CD8-positive, alpha-beta T cell (primary cell): ENCODE measurements at regions of chr2 and their contacts with region 1.

Region 1: GRCh38 chr2:191144217-191144616 is 6.6 kb downstream of the STAT4 start:
- DNase-seq: no peak
- ATAC-seq: no peak
- H3K4me3 ChIP-seq: no peak overlapping the region
- H3K4me3 Mint-ChIP-seq: peak overlapping the region; percentile 40
- H3K27ac ChIP-seq: no peak overlapping the region
- H3K27ac Mint-ChIP-seq: peak overlapping the region; percentile 28
- H3K4me1 ChIP-seq: peaks cover 65% of the 10 kb centered on the region
- H3K4me1 Mint-ChIP-seq: peaks cover 82% of the 10 kb centered on the region
- H3K27me3 ChIP-seq: no peaks in the 10 kb centered on the region
- H3K27me3 Mint-ChIP-seq: no peaks in the 10 kb centered on the region
- CTCF ChIP-seq: no peak

Region 2: DNA sequence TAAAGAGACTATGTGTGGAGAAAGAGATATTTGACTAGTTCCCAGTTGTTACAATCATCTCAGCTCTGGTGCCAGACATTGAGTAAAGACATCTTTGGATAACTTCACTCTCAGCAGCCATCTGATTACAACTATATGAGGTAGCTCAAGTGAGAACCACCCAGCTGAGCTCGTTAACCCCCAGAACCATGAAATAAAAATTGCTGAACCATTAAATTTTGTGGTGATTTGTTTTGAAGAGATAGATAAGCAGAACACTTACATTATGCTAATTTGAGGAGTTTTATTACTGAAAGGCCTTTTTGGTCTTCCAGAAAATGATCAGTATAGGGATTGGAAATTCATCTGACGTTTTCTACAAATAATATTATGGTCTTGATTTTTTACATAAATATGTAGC is 1258.8 kb before region 1 on chr2:
- CTCF ChIA-PET with region 1: no interaction called
- POLR2A ChIA-PET with region 1: no interaction called
- intact Hi-C with region 1: no loop called
- DNase-seq: no peak
- ATAC-seq: no peak
- H3K4me3 ChIP-seq: no peak overlapping the region
- H3K4me3 Mint-ChIP-seq: no peak overlapping the region
- H3K27ac ChIP-seq: no peak overlapping the region
- H3K27ac Mint-ChIP-seq: no peak overlapping the region
- H3K4me1 ChIP-seq: no peaks in the 10 kb centered on the region
- H3K4me1 Mint-ChIP-seq: no peaks in the 10 kb centered on the region
- H3K27me3 ChIP-seq: peaks cover 0 to 2% of the 10 kb centered on the region in 2 experiments
- H3K27me3 Mint-ChIP-seq: peaks cover 5% of the 10 kb centered on the region
- CTCF ChIP-seq: no peak

Region 3: GRCh38 chr2:190670182-190670946 is 473.9 kb before region 1 on chr2:
- CTCF ChIA-PET with region 1: no interaction called
- POLR2A ChIA-PET with region 1: no interaction called
- intact Hi-C with region 1: no loop called
- DNase-seq: peak in 2 of 9 experiments; percentile 31 to 59
- ATAC-seq: peak; percentile 69
- H3K4me3 ChIP-seq: no peak overlapping the region
- H3K4me3 Mint-ChIP-seq: peak overlapping the region; percentile 8
- H3K27ac ChIP-seq: no peak overlapping the region
- H3K27ac Mint-ChIP-seq: peak overlapping the region; percentile 49
- H3K4me1 ChIP-seq: peaks cover 8% of the 10 kb centered on the region
- H3K4me1 Mint-ChIP-seq: peaks cover 39% of the 10 kb centered on the region
- H3K27me3 ChIP-seq: no peaks in the 10 kb centered on the region
- H3K27me3 Mint-ChIP-seq: no peaks in the 10 kb centered on the region
- CTCF ChIP-seq: no peak

Region 4: DNA sequence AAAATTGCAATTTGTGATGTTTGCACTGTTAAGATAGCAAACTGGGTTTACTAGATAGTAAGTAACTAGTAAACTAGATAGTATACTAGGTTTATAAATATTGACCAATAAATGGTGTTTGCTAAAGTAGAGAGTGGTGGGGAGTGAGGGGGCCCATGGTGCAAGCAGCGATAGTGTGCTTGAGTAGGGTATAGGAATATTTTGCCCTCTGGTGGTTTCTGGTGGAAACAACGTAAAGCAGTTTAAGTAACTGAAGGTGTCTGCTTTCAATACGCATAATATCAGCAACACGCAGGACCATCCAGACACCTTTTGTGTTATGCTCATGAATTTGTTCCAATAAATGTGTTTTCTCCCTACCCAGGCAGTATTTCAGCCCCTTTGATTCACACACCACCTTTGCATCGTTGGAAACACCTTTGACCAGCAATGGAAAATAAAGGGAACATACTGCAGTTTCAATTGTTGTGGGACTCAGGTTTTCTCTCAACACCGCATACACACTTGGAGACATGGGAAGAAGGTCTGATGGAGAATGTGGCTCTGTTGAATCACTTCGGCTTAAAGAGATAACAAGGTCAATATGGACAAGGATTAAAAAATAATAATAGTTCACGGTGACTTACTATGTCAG is 113.6 kb before region 1 on chr2:
- CTCF ChIA-PET with region 1: no interaction called
- POLR2A ChIA-PET with region 1: no interaction called
- intact Hi-C with region 1: no loop called
- DNase-seq: peak in 4 of 9 experiments; percentile 41 to 81 (median 60)
- ATAC-seq: peak; percentile 90
- H3K4me3 ChIP-seq: no peak overlapping the region
- H3K4me3 Mint-ChIP-seq: no peak overlapping the region
- H3K27ac ChIP-seq: peak overlapping the region in 1 of 2 experiments; percentile 58
- H3K27ac Mint-ChIP-seq: peak overlapping the region; percentile 62
- H3K4me1 ChIP-seq: peaks cover 26% of the 10 kb centered on the region
- H3K4me1 Mint-ChIP-seq: peaks cover 26% of the 10 kb centered on the region
- H3K27me3 ChIP-seq: no peaks in the 10 kb centered on the region
- H3K27me3 Mint-ChIP-seq: no peaks in the 10 kb centered on the region
- CTCF ChIP-seq: peak; percentile 76

Region 5: GRCh38 chr2:191103774-191104173 is 40.4 kb before region 1 on chr2:
- CTCF ChIA-PET with region 1: interaction called, 3 read pairs
- POLR2A ChIA-PET with region 1: interaction called, 3 read pairs
- intact Hi-C with region 1: loop called in 1 of 2 experiments (anchors 5 kb)
- DNase-seq: no peak
- ATAC-seq: no peak
- H3K4me3 ChIP-seq: no peak overlapping the region
- H3K4me3 Mint-ChIP-seq: no peak overlapping the region
- H3K27ac ChIP-seq: no peak overlapping the region
- H3K27ac Mint-ChIP-seq: no peak overlapping the region
- H3K4me1 ChIP-seq: peaks cover 4% of the 10 kb centered on the region
- H3K4me1 Mint-ChIP-seq: peaks cover 49% of the 10 kb centered on the region
- H3K27me3 ChIP-seq: no peaks in the 10 kb centered on the region
- H3K27me3 Mint-ChIP-seq: no peaks in the 10 kb centered on the region
- CTCF ChIP-seq: no peak